WTC11 (cell line): ENCODE measurements at regions of chr11 and their contacts with region 1.

Region 1: DNA sequence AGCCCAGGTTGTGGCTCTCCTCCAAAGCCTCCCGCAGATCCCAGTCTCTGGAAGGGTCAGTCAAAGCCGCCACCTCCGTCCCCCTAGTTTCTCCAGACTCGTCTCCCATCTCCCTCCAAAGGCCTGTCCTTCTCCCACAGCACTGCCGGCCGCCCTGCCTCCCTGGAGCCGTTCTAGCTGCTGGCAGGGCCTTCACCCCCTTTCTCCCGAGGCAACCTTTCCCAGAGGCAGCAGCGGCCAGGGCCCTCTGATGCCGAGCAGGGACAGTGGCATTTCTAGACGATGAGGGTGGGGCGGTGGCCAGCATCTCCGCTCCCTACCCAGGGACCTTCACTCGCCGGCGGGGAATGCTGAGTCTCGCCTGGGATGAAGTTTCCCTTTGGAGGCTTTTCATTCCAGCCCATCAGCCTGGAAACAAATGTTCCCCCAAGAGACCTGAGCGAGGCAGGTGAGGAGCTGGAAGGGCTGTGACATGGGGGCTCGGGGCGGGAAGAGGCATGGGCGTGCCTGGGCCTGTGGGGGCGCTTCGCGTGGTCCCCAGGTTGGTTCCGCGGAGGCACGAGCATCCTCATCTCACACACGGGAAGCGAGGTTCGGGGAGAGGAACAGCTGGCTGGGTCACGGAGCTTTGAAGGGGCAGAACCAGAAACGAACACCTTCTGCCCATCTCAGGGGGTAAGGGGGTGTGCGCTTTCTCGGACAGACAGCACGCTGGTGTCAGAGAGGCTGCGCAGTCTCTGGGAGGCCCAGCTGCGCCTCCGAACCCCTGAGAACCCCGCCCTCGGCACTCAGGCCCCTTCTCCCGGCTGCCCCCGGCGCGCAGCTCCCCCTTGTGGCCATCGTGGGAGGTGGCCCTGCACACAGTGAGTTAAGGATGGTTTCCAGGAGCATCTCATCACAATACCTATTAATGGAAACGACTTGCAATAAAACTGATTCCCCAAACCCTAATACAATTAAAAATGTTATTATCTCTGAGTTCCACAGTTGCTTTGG is 18.1 kb upstream of the KLHL35 start:
- DNase-seq: peak; percentile 90
- ATAC-seq: peak; percentile 87
- H3K4me3 Mint-ChIP-seq: peak overlapping the region; percentile 46
- H3K27ac Mint-ChIP-seq: no peak overlapping the region
- H3K4me1 Mint-ChIP-seq: no peaks in the 10 kb centered on the region
- H3K27me3 Mint-ChIP-seq: peaks cover 4% of the 10 kb centered on the region
- CTCF ChIP-seq: peak; percentile 94

Region 2: GRCh38 chr11:73838443-73839122 is 1612.5 kb before region 1 on chr11:
- CTCF ChIA-PET with region 1: no interaction called
- POLR2A ChIA-PET with region 1: no interaction called
- DNase-seq: no peak
- ATAC-seq: peak; percentile 71
- H3K4me3 Mint-ChIP-seq: no peak overlapping the region
- H3K27ac Mint-ChIP-seq: peak overlapping the region; percentile 73
- H3K4me1 Mint-ChIP-seq: peaks cover 10% of the 10 kb centered on the region
- H3K27me3 Mint-ChIP-seq: no peaks in the 10 kb centered on the region
- CTCF ChIP-seq: no peak

Region 3: DNA sequence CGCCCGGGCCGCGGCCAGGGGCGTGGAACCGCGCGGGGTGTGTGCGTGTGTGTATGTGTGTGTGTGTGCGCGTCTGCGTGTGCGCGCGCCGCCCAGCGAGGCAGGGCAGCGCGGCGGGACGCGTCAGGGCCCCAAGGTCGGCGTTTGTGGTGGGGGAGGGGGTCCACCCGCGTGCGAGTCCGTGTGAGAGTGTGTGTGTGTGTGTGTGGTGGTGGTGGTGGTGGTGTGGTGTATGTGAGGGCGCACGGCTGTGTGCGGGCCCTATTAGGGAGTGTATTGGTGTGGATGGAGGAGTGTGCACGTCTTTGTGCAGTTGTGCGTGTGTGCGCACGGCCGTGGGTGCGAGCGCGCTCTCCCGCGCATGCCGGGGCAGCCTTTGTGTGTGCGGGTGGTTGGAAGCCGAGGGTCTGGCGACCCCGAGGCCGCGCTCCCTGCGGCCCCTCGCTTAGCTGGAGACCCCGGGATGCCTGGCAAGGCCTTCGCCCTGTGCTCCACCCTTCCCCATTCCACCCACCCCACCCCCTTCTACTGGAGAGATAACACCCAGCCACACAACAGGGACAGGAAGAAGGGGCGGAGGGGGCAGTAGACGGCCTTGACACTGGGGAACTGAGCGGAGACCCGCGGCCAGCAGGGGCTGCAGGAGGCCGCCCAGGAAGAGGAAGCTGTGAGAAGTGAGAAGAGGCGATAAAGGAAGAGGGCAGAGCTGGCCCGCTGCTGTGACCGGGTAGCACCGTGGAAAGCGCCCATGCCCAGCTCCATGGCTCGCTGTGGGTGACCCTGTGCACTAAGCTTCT is 99.1 kb before region 1 on chr11:
- CTCF ChIA-PET with region 1: no interaction called
- POLR2A ChIA-PET with region 1: no interaction called
- DNase-seq: peak; percentile 66
- ATAC-seq: peak; percentile 73
- H3K4me3 Mint-ChIP-seq: peak overlapping the region; percentile 73
- H3K27ac Mint-ChIP-seq: 0 out of 2 replicates have a peak overlapping the region, but pooled peaks have one; percentile 30
- H3K4me1 Mint-ChIP-seq: peaks cover 58% of the 10 kb centered on the region
- H3K27me3 Mint-ChIP-seq: peaks cover 8% of the 10 kb centered on the region
- CTCF ChIP-seq: no peak

Region 4: GRCh38 chr11:75425422-75425821 is 25.7 kb before region 1 on chr11:
- CTCF ChIA-PET with region 1: interaction called, 11 read pairs
- POLR2A ChIA-PET with region 1: no interaction called
- DNase-seq: peak; percentile 81
- ATAC-seq: peak; percentile 73
- H3K4me3 Mint-ChIP-seq: no peak overlapping the region
- H3K27ac Mint-ChIP-seq: no peak overlapping the region
- H3K4me1 Mint-ChIP-seq: peaks cover 21% of the 10 kb centered on the region
- H3K27me3 Mint-ChIP-seq: peaks cover 42% of the 10 kb centered on the region
- CTCF ChIP-seq: no peak; the same call in 1 of the 2 replicates

Region 5: DNA sequence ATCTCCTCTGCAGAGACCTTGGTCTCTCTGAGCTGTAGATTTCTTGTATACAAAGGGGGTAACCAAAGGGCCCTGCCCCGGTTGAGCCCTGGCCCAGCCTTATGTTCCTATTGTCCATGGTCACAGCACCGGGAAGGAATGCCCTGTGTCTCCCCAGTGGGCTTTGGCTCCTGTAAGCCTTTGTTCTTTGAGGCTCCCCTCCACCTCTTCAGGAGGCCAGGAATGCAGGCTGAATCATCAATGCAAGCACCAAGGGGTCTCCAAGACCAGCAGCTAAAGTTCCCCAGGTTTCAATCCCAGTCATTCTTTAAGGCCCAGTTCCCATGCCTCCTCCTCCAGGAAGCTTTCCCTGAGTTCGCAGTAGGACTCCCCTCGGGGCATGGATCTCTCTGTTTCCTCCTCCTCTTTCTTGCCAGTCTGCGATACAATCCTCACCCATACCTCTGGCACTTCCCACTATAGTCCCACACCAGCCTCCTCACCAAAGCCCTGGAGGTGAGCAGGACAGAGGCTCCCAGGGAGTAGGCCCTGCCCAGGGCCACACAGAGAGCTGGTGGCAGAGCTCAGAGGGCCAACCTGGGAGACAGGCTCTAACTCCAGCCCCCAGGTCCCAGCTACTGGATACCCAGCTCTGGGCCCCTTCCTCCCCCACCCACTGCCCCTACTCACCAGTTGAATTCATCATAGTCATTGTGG is 11.1 kb after region 1 on chr11:
- CTCF ChIA-PET with region 1: interaction called, 40 read pairs
- POLR2A ChIA-PET with region 1: no interaction called
- DNase-seq: peak; percentile 30
- ATAC-seq: peak; percentile 70
- H3K4me3 Mint-ChIP-seq: no peak overlapping the region
- H3K27ac Mint-ChIP-seq: peak overlapping the region; percentile 18; the same call in 1 of the 2 replicates
- H3K4me1 Mint-ChIP-seq: peaks cover 38% of the 10 kb centered on the region
- H3K27me3 Mint-ChIP-seq: no peaks in the 10 kb centered on the region
- CTCF ChIP-seq: no peak

Region 6: GRCh38 chr11:75474878-75475766 is 24.0 kb after region 1 on chr11:
- CTCF ChIA-PET with region 1: interaction called, 34 read pairs
- POLR2A ChIA-PET with region 1: no interaction called
- DNase-seq: peak; percentile 85
- ATAC-seq: peak; percentile 92
- H3K4me3 Mint-ChIP-seq: peak overlapping the region; percentile 60
- H3K27ac Mint-ChIP-seq: peak overlapping the region; percentile 76; the same call in 1 of the 2 replicates
- H3K4me1 Mint-ChIP-seq: peaks cover 22% of the 10 kb centered on the region
- H3K27me3 Mint-ChIP-seq: no peaks in the 10 kb centered on the region; the same call in 1 of the 2 replicates
- CTCF ChIP-seq: no peak

Region 7: DNA sequence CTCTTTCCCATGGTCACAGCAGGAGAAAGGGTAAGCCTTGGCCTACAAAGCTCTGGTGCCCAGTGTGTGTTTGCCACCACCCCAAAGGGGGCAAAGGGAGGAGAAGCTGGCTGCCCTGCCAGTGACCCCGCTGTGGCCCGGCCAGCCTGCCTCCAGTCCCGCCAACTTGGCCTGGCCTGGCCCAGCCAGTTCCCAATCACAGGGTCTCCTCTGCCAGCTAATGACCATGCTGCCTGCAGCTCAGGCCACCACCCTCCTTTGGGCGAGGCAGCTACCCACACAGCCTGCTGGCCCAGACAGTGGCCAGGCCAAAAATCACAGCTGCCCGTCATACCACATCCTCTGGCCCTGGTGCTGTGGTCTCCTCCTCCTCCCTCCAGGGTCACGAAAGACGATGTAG is 69.6 kb after region 1 on chr11:
- CTCF ChIA-PET with region 1: interaction called, 31 read pairs
- POLR2A ChIA-PET with region 1: interaction called, 3 read pairs
- DNase-seq: no peak
- ATAC-seq: no peak
- H3K4me3 Mint-ChIP-seq: no peak overlapping the region
- H3K27ac Mint-ChIP-seq: no peak overlapping the region
- H3K4me1 Mint-ChIP-seq: peaks cover 16% of the 10 kb centered on the region
- H3K27me3 Mint-ChIP-seq: peaks cover 28% of the 10 kb centered on the region
- CTCF ChIP-seq: no peak

Region 8: DNA sequence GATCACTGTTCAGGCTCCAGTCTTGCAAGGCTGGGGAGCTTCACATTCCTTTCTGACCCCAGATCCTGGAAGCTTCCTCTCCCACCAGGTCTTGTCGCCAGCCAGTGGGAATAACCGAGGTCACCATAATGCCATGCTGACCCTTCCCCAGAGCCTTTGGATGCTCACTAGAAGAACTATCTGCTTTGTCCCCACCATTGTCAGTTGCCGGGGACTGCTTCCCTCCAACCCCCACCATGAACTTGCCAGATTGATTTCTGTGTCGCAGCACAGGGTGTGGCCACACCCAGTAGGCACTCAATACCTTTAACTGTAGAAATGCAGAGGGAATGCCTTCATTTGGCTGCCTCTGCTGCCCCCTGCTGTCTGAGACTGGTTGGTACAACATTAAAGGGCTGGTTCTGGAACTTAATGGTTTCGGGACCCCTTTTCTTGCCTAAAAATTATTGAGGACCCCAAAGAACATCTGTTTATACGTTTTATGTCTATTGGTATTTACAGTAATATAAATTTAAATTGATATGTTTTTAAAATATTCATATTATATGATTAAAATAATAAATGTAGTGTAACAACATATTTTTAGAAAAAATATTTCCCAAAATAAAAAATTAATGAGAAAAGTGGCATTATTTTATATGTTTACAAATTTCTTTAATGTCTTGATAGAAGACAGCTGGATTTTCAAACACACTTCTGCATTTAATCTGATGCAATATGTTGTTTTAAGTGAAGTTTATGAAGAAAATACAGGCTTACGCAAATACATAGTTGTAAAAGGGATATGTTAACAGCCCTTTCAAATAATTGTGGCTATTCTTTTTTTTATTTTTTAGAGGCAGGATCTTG is 81.3 kb after region 1 on chr11:
- CTCF ChIA-PET with region 1: interaction called, 69 read pairs
- POLR2A ChIA-PET with region 1: no interaction called
- DNase-seq: peak; percentile 88
- ATAC-seq: peak; percentile 89
- H3K4me3 Mint-ChIP-seq: peak overlapping the region; percentile 44
- H3K27ac Mint-ChIP-seq: peak overlapping the region; percentile 39; the same call in 1 of the 2 replicates
- H3K4me1 Mint-ChIP-seq: peaks cover 18% of the 10 kb centered on the region
- H3K27me3 Mint-ChIP-seq: peaks cover 2% of the 10 kb centered on the region; the same call in 1 of the 2 replicates
- CTCF ChIP-seq: peak; percentile 72

Region 9: DNA sequence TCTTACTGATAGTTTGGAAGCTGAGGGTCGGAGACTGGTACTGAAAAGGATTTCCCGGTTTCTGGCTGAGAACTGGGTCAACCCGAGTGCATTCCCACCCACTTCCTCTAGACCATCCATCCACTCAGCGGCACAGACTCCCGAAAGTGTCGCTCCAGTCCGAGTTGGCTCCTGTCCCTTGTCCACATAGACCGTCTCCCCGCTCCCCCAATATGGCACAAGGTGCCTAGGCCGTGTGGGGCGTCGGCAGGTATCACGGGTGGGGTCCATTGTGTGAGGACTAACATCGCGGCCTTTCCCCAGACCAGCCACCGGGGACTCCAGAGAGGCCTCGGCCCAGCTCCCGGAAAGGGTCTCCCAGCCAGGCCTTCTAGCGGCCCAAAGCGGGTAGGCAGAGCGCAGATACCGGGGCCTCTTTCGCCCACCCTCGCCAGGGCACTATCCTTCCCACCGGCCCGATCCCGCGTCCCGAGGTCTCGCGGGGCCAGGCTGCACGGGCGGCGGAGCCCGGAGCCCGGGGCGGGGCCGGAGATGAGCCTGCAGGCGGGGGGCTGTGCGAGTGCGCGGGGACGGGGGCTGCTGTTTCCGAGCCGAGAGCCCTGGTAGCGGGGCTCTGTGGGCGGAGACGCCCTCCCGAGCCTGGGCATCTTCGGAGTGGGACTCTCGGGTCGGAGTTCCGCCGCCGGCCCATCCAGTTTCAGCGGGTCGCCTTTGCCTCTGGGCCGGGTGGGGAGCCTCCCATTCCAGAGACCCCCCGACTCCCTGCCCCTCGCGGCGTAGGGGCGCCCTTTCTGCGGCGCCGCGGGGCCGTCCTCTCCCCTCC is 132.0 kb after region 1 on chr11:
- CTCF ChIA-PET with region 1: interaction called, 16 read pairs
- POLR2A ChIA-PET with region 1: no interaction called
- DNase-seq: peak; percentile 77
- ATAC-seq: peak; percentile 72
- H3K4me3 Mint-ChIP-seq: peak overlapping the region; percentile 75
- H3K27ac Mint-ChIP-seq: peak overlapping the region; percentile 72
- H3K4me1 Mint-ChIP-seq: peaks cover 30% of the 10 kb centered on the region
- H3K27me3 Mint-ChIP-seq: peaks cover 16% of the 10 kb centered on the region
- CTCF ChIP-seq: no peak

Region 10: GRCh38 chr11:75768112-75768908 is 317.2 kb after region 1 on chr11 and contains the start of gene DGAT2:
- CTCF ChIA-PET with region 1: no interaction called
- POLR2A ChIA-PET with region 1: no interaction called
- DNase-seq: peak; percentile 67
- ATAC-seq: peak; percentile 63
- H3K4me3 Mint-ChIP-seq: peak within 1 kb of the TSS; percentile 65
- H3K27ac Mint-ChIP-seq: no peak within 1 kb of the TSS
- H3K4me1 Mint-ChIP-seq: peaks cover 23% of the 10 kb centered on the region
- H3K27me3 Mint-ChIP-seq: peaks cover 71% of the 10 kb centered on the region
- CTCF ChIP-seq: no peak
- total RNA-seq, gene DGAT2: 1.6 to 3.3 TPM (median 2.8 TPM) in 3 replicates